A549 (cell line): ENCODE measurements at regions of chr7 and their contacts with region 1.

Region 1: DNA sequence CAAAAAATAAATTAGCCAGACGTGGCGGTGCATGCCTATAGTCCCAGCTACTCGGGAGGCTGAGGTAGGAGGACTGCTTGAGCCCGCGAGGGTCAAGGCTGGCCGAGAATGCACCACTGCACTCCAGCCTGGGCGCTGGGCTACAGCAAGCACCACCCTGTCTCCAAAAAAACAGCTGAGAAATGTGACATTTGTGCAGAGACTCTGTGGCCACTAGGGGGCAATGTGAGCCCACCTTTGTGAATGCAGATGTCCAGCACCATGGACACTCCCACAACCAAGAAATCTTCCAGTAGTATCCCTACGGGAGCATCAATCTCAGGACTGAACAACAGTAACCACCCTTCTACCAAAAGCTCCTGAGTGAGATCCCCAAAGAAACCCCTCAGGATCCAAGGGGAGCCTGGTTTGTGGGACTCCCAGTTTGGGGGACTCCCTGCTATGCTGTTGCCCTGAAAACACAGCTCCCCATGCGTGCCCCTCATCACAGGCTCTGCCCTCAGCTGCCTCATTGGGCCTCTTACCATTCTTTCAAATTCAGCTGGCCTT is 6.2 kb upstream of the AHCYL2 start:
- DNase-seq: peak; percentile 81 to 93
- ATAC-seq: peak; percentile 95 to 96
- H3K4me3 ChIP-seq: no peak overlapping the region
- H3K27ac ChIP-seq: no peak overlapping the region
- H3K4me1 ChIP-seq: 0 out of 3 replicates have a peak, but pooled peaks cover 3% of the 10 kb centered on the region
- CTCF ChIP-seq: peak; percentile 94
- EP300 ChIP-seq: no peak
- POLR2A ChIP-seq: no peak
- RAD21 ChIP-seq: peak; percentile 96 to 98

Region 2: DNA sequence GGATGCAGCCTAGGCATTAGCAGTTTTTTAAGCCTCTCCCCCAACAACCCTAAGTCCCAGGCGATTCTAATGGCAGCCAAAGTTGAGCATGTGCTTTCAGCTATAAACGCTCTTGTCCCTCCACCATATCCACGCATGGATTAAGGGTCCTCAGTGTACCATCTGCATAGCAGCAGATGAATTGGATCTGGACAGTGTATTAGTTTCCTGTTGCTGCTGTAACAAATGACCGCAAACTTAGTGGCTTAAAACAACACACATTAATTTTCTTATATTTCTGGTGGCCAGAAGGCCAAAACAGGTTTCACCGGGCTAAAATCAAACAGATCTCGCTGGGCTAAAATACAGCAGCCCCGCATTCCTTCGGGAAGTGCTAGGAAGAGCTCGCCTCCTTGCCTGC is 60.9 kb before region 1 on chr7:
- CTCF ChIA-PET with region 1: interaction called, 88 read pairs
- POLR2A ChIA-PET with region 1: no interaction called
- DNase-seq: no peak
- ATAC-seq: no peak
- H3K4me3 ChIP-seq: no peak overlapping the region
- H3K27ac ChIP-seq: no peak overlapping the region
- H3K4me1 ChIP-seq: no peaks in the 10 kb centered on the region
- CTCF ChIP-seq: no peak
- EP300 ChIP-seq: no peak
- POLR2A ChIP-seq: no peak
- RAD21 ChIP-seq: no peak

Region 3: DNA sequence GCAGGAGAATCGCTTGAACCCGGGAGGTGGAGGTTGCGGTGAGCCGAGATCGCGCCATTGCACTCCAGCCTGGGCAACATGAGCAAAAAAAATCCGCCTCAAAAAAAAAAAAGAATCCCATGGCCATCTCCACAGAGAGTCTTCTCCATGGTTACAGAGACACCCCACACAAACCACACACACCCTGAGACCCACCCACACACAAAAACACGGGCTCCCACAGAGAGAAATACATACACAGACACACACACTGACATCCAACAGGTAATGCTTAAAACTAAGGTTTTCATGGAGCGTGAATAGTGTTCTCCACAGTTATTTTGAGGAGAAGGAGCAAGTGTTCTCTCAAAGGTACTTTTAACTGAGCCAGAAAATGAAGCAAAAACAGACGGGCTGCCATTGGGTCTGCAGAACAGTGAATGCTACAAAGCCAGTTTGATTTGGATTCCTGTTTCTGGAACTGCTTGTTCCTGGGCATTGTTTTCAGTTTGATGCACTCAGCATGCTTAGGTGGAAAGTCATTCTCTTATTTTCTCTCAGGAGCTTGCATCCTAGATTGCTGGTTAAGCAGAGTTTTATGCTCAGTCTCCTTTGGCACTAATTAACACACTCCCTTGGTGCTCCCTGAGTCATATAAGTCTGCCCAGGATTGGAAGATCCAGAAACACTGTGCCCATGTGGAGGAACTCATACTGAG is 21.7 kb after region 1 on chr7:
- CTCF ChIA-PET with region 1: interaction called, 16 read pairs
- POLR2A ChIA-PET with region 1: no interaction called
- DNase-seq: no peak
- ATAC-seq: no peak
- H3K4me3 ChIP-seq: no peak overlapping the region
- H3K27ac ChIP-seq: no peak overlapping the region
- H3K4me1 ChIP-seq: no peaks in the 10 kb centered on the region
- CTCF ChIP-seq: no peak
- EP300 ChIP-seq: no peak
- POLR2A ChIP-seq: no peak
- RAD21 ChIP-seq: no peak

Region 4: DNA sequence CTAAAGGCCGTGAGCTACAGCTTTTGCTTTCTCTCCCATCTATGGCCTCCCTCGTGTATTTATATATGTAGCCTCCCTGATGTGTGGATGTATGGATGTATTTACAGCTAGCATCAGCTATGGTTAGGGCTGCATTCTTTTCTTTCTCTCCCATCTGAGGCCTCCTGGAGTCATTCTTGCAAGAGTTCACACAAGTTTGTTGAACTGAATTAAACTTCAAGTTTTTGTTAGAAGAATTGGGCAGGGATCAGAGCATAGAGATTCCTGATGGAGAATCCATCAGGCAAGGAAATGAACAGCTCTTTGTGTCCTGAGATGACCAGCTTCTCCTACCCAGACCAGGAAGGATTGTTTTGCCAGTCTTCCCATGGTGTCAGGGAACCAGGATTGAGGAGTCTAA is 66.5 kb after region 1 on chr7:
- CTCF ChIA-PET with region 1: interaction called, 45 read pairs
- POLR2A ChIA-PET with region 1: no interaction called
- DNase-seq: no peak
- ATAC-seq: no peak
- H3K4me3 ChIP-seq: no peak overlapping the region
- H3K27ac ChIP-seq: no peak overlapping the region
- H3K4me1 ChIP-seq: no peaks in the 10 kb centered on the region
- CTCF ChIP-seq: no peak
- EP300 ChIP-seq: no peak
- POLR2A ChIP-seq: no peak
- RAD21 ChIP-seq: no peak

Region 5: GRCh38 chr7:129343099-129343700 is 124.6 kb after region 1 on chr7:
- CTCF ChIA-PET with region 1: interaction called, 29 read pairs
- POLR2A ChIA-PET with region 1: no interaction called
- DNase-seq: peak; percentile 36 to 57
- ATAC-seq: peak; percentile 62 to 81; a peak in 3 of 6 replicates
- H3K4me3 ChIP-seq: no peak overlapping the region
- H3K27ac ChIP-seq: no peak overlapping the region
- H3K4me1 ChIP-seq: no peaks in the 10 kb centered on the region
- CTCF ChIP-seq: peak; percentile 79
- EP300 ChIP-seq: no peak
- POLR2A ChIP-seq: no peak
- RAD21 ChIP-seq: peak; percentile 64 to 66; a peak in 4 of 5 replicates

Region 6: DNA sequence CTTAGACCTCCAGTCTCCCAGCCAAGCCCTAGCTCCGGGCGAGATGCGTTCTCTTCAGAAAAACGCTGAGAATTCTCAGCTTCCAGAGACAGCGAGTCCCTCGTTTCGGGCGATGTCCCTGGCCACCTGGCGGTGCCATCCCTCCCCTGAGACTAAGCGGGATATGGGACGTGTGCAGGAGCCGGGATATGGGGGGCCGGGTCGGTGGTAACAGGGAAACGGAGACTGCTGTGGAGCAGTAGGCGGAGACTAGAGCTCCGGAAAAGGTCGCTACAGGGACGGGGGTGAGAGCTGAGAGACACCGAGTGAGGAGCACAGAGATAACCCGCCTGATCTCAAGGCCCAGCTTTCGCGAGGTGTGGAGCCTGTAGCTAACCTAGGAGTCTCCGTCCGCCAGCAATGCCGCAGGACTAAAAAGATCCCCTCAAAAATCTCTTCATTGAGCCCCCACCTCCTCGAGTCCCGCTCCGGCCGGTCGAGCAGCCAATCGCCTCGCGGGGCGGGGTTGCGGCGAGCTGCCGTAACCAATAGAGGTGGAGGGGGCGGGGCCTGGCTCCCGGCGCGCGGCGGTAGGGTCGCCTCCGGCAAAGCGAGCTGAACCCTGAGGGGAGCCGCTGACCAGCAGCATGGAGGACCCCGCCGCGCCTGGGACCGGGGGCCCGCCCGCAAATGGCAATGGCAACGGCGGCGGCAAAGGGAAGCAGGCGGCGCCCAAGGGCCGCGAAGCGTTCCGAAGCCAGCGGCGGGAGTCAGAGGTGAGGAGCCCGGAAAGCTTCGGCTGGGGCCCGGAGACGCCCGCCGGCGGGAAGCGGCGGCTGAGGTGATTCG is 215.5 kb after region 1 on chr7 and contains the start of gene STRIP2:
- CTCF ChIA-PET with region 1: interaction called, 10 read pairs
- POLR2A ChIA-PET with region 1: no interaction called
- DNase-seq: peak; percentile 70 to 94
- ATAC-seq: peak; percentile 93 to 96
- H3K4me3 ChIP-seq: peak within 1 kb of the TSS; percentile 85
- H3K27ac ChIP-seq: peak within 1 kb of the TSS; percentile 66 to 87
- H3K4me1 ChIP-seq: peaks cover 12% of the 10 kb centered on the region
- CTCF ChIP-seq: no peak
- EP300 ChIP-seq: no peak
- POLR2A ChIP-seq: peak; percentile 37; the same call in 1 of the 2 replicates
- RAD21 ChIP-seq: no peak
- polyA plus RNA-seq, gene STRIP2: 4.9 and 6.5 TPM in 2 replicates

Region 7: GRCh38 chr7:129644634-129645230 is 426.1 kb after region 1 on chr7:
- CTCF ChIA-PET with region 1: interaction called, 22 read pairs
- POLR2A ChIA-PET with region 1: no interaction called
- DNase-seq: peak in 1 of 2 experiments; percentile 55
- ATAC-seq: peak in 1 of 2 experiments; percentile 67; a peak in 3 of 6 replicates
- H3K4me3 ChIP-seq: no peak overlapping the region
- H3K27ac ChIP-seq: no peak overlapping the region
- H3K4me1 ChIP-seq: peaks cover 28% of the 10 kb centered on the region; the same call in 2 of the 3 replicates
- CTCF ChIP-seq: peak; percentile 79
- EP300 ChIP-seq: no peak
- POLR2A ChIP-seq: no peak
- RAD21 ChIP-seq: peak; percentile 81